Activated CD8-positive, alpha-beta memory T cell treated with anti-CD3 and anti-CD28 coated beads, Interleukin-2, amount 10 ng/mL, durations not matched to agents 7 days and 5 days (primary cell): ENCODE measurements at regions of chr14 and their contacts with region 1.

Region 1: DNA sequence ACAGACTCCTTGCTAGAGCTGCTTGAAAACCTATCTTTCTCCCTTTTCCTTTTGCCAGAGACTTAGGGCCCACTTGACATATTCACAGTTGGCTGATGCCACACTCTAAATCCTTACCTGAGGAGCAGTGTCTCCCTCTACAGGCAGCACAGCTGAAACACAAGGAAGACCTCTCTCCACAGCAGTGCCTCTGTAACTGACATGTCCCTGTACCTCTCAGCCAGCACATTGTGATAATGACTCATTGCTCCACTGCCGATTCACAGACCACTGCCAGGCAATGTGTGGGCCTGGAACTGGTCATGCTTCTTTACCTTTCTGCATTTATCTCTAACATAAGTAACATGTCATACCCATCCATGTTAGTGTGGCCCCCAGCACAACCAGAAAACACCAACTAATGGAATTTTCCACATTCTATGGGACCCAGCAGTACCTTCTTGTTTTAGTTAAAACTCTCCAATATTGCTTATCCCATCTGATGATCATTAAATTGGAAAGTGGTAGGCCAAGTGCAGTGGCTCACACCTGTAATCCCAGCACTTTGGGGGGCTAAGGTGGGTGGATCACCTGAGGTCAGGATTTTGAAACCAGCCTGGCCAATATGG is 56.5 kb downstream of the GTF2A1 start:
- DNase-seq: peak; percentile 79
- ATAC-seq: peak; percentile 96
- H3K4me3 Mint-ChIP-seq: no peak overlapping the region
- H3K27ac Mint-ChIP-seq: no peak overlapping the region
- H3K4me1 Mint-ChIP-seq: peaks cover 18% of the 10 kb centered on the region
- H3K27me3 Mint-ChIP-seq: no peaks in the 10 kb centered on the region

Region 2: GRCh38 chr14:80996049-80996901 is 168.0 kb before region 1 on chr14:
- CTCF ChIA-PET with region 1: interaction called, 10 read pairs
- DNase-seq: peak; percentile 47
- ATAC-seq: peak; percentile 69
- H3K4me3 Mint-ChIP-seq: no peak overlapping the region
- H3K27ac Mint-ChIP-seq: no peak overlapping the region
- H3K4me1 Mint-ChIP-seq: peaks cover 7% of the 10 kb centered on the region
- H3K27me3 Mint-ChIP-seq: peaks cover 55% of the 10 kb centered on the region

Region 3: GRCh38 chr14:81246461-81247145 is 82.3 kb after region 1 on chr14:
- CTCF ChIA-PET with region 1: no interaction called
- DNase-seq: no peak
- ATAC-seq: no peak
- H3K4me3 Mint-ChIP-seq: no peak overlapping the region
- H3K27ac Mint-ChIP-seq: no peak overlapping the region
- H3K4me1 Mint-ChIP-seq: no peaks in the 10 kb centered on the region
- H3K27me3 Mint-ChIP-seq: no peaks in the 10 kb centered on the region